Dendritic cell treated with granulocyte-macrophage colony-stimulating factor and Interleukin-4, amounts not matched to agents 40 ng/mL and 50 ng/mL, for 4 days (primary cell): ENCODE measurements at regions of chr19 and their contacts with region 1.

Region 1: GRCh38 chr19:19033426-19034203 is at the starts of genes ARMC6 and SUGP2:
- H3K4me3 Mint-ChIP-seq: peak within 1 kb of the TSS; percentile 80
- H3K27ac Mint-ChIP-seq: peak within 1 kb of the TSS; percentile 78
- H3K4me1 Mint-ChIP-seq: peaks cover 31% of the 10 kb centered on the region
- H3K27me3 Mint-ChIP-seq: no peaks in the 10 kb centered on the region

Region 2: DNA sequence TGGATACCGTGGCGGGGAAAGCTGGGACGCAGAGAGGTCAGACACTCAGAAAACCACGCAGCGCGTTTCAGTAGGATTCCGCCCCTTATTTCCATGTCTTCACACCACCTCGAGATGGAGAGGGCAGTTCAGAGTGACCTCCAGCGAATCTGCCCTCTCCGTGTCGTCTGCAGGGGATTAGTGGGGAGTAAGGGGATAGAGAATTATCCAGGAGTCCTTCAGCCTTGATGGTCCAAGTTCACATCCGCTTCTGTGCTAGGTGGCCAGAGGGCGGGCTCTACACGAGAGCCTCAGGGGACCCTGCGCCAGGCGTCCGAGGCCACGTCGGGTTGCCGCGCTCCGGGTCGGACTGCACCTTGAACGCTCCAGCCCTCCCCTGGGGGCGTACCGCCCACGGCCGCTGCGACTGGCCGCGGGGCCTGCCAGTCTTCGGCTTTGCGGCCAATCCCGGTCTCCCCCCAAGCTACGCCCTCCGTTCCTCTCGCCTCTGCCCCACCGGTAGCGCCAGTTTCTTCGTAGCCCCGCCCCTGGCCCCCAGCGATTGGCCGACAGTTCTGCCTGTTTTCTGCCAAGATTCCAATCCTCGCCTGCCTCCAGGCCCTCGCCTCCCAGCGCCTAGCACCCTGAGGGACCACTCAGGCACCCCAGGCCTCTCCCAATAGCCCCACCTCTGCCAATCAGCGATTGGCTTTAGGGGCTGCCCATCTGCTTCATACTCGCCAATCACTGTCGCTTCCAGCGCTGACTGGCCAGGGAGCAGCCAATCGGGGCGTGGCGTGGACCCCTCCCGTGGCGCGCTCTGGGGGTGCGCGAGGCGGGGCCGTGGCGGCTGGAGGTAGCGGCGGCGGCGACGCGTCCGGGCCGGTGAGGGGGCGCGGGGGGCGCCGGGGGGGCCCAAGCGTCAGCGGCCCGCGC is 29.8 kb after region 1 on chr19 and contains the start of gene SLC25A42:
- intact Hi-C with region 1: loop called (anchors 1 kb)
- H3K4me3 Mint-ChIP-seq: peak within 1 kb of the TSS; percentile 70
- H3K27ac Mint-ChIP-seq: peak within 1 kb of the TSS; percentile 38
- H3K4me1 Mint-ChIP-seq: peaks cover 22% of the 10 kb centered on the region
- H3K27me3 Mint-ChIP-seq: peaks cover 6% of the 10 kb centered on the region

Region 3: GRCh38 chr19:19138169-19138981 is 104.8 kb after region 1 on chr19 and contains the start of gene TMEM161A:
- intact Hi-C with region 1: loop called (anchors 1 kb)
- H3K4me3 Mint-ChIP-seq: peak within 1 kb of the TSS; percentile 99
- H3K27ac Mint-ChIP-seq: peak within 1 kb of the TSS; percentile 97
- H3K4me1 Mint-ChIP-seq: peaks cover 32% of the 10 kb centered on the region
- H3K27me3 Mint-ChIP-seq: peaks cover 10% of the 10 kb centered on the region